Pancreas (tissue), 10 donors: ENCODE measurements at regions of chr14 and their contacts with region 1.

Region 1: GRCh38 chr14:76050797-76051392 is 65.3 kb downstream of the IFT43 start:
- DNase-seq: peak in 3 of 6 donors; percentile 20 to 64 (median 26)
- ATAC-seq: peak; percentile 58 to 88 (median 84)
- H3K4me3 ChIP-seq: no peak overlapping the region
- H3K27ac ChIP-seq: no peak overlapping the region
- H3K4me1 ChIP-seq: no peaks in the 10 kb centered on the region
- H3K27me3 ChIP-seq: no peaks in the 10 kb centered on the region
- CTCF ChIP-seq: peak; percentile 49 to 70 (median 58)

Region 2: GRCh38 chr14:75960231-75960630 is 90.7 kb before region 1 on chr14:
- intact Hi-C with region 1: no loop called
- DNase-seq: no peak
- ATAC-seq: no peak
- H3K4me3 ChIP-seq: no peak overlapping the region
- H3K27ac ChIP-seq: no peak overlapping the region
- H3K4me1 ChIP-seq: no peaks in the 10 kb centered on the region
- H3K27me3 ChIP-seq: no peaks in the 10 kb centered on the region
- CTCF ChIP-seq: no peak

Region 3: DNA sequence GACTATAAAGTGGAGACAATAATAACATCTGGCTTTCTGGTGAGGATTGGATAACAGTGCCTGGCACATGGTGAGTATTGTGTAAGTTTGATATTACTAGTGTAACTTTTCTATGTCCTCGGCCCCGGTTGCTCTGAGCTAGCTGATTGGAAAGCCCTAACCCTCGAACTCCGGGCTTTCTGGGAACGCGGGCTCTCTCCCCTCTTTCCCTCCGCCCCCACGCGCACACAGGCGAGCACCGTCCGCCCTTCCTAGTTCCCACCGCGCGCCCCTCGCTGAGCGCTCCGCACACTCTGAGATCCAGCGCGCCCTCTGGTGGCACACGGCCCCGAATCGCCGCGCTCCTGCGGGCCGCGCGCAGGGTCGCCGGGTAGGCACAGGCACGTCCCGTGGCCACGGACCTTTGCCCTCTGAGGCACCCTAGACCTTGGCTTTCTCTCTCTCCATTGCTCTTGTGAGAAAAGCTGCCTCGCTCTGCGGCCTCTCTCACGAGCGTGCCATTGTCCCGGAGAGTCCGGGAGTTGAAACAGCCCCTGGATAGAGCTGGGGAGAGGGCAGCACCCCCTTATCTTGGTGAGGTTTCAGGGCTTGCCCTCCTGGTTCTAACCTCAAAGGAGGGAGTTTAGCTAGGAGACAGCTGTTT is 301.9 kb after region 1 on chr14:
- intact Hi-C with region 1: loop called in 2 of 3 experiments (anchors 5 kb)
- DNase-seq: peak; percentile 24 to 90 (median 62)
- ATAC-seq: peak; percentile 84 to 94 (median 91)
- H3K4me3 ChIP-seq: peak overlapping the region in 2 of 4 donors; percentile 26 to 35
- H3K27ac ChIP-seq: no peak overlapping the region
- H3K4me1 ChIP-seq: no peaks in the 10 kb centered on the region
- H3K27me3 ChIP-seq: no peaks in the 10 kb centered on the region
- CTCF ChIP-seq: peak; percentile 51 to 83 (median 76)